CD4-positive, alpha-beta T cell (primary cell): ENCODE measurements at regions of chr20 and their contacts with region 1.

Region 1: DNA sequence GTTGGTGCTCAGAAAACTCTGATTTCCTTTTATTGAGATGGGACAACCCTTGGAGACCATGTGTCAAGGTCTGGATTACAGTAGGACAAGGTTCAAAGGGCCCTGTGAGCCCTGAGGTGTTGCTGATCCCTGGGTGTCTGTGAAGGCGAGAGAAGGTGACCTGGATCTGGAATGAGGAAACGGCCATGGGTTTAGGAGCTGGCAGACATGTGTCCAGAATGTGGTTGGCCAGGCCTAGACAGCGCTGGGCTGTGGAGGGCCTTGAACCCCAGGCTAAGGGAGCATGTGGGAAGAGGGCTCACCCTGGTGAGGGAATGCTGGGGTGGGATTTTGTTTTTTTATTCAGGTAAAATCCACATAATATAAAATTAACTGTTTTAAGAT is 24.9 kb downstream of the PCMTD2 start:
- DNase-seq: no peak
- ATAC-seq: no peak
- H3K4me3 ChIP-seq: no peak overlapping the region
- H3K4me3 Mint-ChIP-seq: no peak overlapping the region
- H3K27ac ChIP-seq: no peak overlapping the region
- H3K27ac Mint-ChIP-seq: no peak overlapping the region
- H3K4me1 ChIP-seq: no peaks in the 10 kb centered on the region
- H3K4me1 Mint-ChIP-seq: peaks cover 5% of the 10 kb centered on the region
- H3K27me3 ChIP-seq: no peaks in the 10 kb centered on the region
- H3K27me3 Mint-ChIP-seq: no peaks in the 10 kb centered on the region
- CTCF ChIP-seq: no peak

Region 2: GRCh38 chr20:64255361-64256281 is 24.8 kb before region 1 on chr20 and contains the start of gene PCMTD2:
- CTCF ChIA-PET with region 1: interaction called, 31 read pairs
- POLR2A ChIA-PET with region 1: interaction called, 6 read pairs
- intact Hi-C with region 1: no loop called
- DNase-seq: peak; percentile 60 to 94 (median 84)
- ATAC-seq: peak; percentile 86
- H3K4me3 ChIP-seq: peak within 1 kb of the TSS; percentile 90
- H3K4me3 Mint-ChIP-seq: peak within 1 kb of the TSS; percentile 94
- H3K27ac ChIP-seq: peak within 1 kb of the TSS; percentile 74 to 77
- H3K27ac Mint-ChIP-seq: peak within 1 kb of the TSS; percentile 94
- H3K4me1 ChIP-seq: peaks cover 34% of the 10 kb centered on the region
- H3K4me1 Mint-ChIP-seq: peaks cover 54% of the 10 kb centered on the region
- H3K27me3 ChIP-seq: no peaks in the 10 kb centered on the region
- H3K27me3 Mint-ChIP-seq: peaks cover 5% of the 10 kb centered on the region
- CTCF ChIP-seq: no peak
- total RNA-seq, gene PCMTD2: 68.5 to 76.5 TPM